Sciatic nerve (tissue), 2 donors: ENCODE measurements at regions of chr10 and their contacts with region 1.

Region 1: GRCh38 chr10:11782793-11783557 is 40.2 kb upstream of the PROSER2 start:
- DNase-seq: no peak
- ATAC-seq: peak; percentile 40

Region 2: DNA sequence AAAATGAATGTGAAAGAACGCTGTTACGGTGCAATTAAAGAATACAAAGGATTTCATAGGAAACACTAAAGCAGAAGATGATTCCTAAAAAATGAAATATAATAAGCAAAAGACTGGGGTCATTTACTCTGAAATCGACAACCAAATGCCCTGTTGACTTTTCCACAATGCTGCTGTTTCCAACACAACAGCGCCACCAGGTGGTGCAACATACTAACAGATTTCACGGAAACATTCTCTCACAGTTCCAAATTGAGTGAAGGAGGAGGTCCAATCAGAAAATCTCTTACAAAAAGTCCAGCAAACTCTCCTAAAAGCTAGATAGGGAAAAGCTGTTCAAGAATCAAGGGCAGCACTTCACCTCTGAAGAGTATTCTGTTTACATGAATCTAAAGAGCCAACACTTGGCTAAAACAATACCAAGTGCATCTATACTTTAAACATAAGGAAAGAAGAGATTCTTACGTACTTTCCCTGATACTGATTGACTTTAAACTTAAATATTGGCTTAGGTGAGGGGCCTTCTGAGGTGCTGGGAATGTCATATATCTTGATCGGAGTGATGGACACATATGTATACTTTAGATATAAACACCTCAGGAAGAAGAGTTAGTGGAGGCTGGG is 203.7 kb after region 1 on chr10:
- intact Hi-C with region 1: loop called (anchors 10 kb)
- DNase-seq: peak; percentile 90
- ATAC-seq: peak; percentile 62